ENCODE measurements at regions of chr10 and their contacts with region 1.

Region 1: DNA sequence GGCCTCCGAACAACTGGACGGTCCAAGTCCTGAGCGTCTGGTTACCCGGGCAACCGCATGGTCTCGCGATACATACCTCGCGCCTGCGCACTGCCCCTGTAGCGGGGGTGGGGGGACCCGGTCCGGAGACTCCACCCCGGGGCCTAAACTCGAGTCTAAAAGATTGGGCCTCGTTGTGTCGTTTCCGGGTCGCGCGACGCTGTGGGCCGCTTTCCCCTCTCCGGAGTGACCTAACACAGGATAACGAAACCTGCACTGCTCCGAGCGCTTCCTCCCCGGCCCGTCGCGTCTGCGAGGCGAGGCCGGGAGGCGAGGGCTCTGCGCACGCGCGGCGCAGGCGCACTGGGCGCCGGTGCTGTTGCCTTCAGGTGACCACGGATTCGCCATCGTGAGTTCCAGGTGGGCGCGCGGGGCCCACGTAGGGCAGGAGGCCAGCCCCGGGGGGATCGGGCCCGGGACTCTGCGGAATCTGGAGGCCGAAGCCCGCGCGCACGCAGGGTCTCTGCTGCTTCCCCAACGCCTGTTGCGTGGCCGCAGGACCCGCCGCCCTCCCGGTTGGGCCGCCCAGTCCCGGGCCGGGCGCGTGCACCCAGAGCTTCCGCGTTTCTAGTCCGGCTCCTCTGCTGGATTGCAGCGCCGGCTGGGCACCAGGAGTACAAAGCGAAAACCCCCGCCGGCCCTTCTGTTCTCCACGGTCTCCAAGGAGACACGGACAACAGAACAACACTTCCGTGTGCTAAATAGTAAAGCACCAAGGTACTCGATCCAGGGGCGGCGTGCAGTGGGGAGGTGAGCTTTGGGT is at the start of gene RPP38:
- DNase-seq: peak; percentile 91
- H3K4me3 Mint-ChIP-seq: peak within 1 kb of the TSS; percentile 95
- H3K27ac Mint-ChIP-seq: peak within 1 kb of the TSS; percentile 98
- H3K4me1 Mint-ChIP-seq: peaks cover 21% of the 10 kb centered on the region
- H3K27me3 Mint-ChIP-seq: peaks cover 3% of the 10 kb centered on the region
- total RNA-seq, gene RPP38: 19.4 and 20.3 TPM in 2 replicates

Region 2: GRCh38 chr10:14954001-14954770 is 143.0 kb before region 1 on chr10 and contains the start of gene DCLRE1C:
- intact Hi-C with region 1: loop called (anchors 1 kb)
- DNase-seq: peak; percentile 89
- H3K4me3 Mint-ChIP-seq: peak within 1 kb of the TSS; percentile 89
- H3K27ac Mint-ChIP-seq: peak within 1 kb of the TSS; percentile 93
- H3K4me1 Mint-ChIP-seq: peaks cover 44% of the 10 kb centered on the region
- H3K27me3 Mint-ChIP-seq: no peaks in the 10 kb centered on the region
- total RNA-seq, gene DCLRE1C: 20.5 and 21.0 TPM in 2 replicates

Region 3: DNA sequence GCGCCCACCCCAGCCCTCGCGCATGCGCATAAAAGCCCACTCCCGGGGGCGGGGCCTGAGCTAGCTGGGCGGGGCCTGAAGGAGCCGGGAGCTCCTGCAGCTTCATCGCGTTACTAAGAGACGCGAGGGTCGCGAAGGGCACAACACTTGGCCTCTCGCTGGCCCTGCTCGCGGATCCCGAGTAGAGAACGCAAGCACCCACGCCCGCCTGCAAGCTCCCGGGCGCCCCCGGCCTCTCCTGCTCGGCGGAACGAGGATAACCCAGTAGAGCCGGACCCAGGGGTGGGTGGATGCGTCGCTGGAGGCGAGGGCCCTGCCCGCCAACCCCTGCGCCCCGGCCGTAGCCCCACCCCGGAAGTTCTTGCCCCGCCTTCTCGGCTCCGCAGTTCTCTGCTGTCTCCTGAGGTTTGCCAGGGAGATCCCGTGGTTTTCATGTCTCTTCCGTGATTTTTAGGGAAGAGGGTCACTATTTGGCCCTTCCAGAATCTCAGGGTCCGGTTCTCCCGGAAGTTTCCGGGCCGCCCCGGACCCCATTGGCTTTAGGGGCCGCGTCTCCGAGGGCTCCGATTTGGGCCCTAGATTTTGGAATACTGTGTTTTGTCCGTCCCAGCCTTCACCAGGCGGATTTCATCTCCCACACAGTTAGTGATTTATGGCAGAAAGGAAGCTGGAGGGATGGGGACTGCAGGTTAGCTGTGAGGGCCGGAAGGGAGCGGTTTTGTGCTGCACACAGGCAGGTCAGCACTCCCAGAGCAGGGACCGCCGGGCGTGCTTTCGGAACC is 137.7 kb before region 1 on chr10 and contains the start of gene MEIG1:
- intact Hi-C with region 1: loop called (anchors 1 kb)
- DNase-seq: peak; percentile 88
- H3K4me3 Mint-ChIP-seq: peak within 1 kb of the TSS; percentile 94
- H3K27ac Mint-ChIP-seq: peak within 1 kb of the TSS; percentile 99
- H3K4me1 Mint-ChIP-seq: peaks cover 29% of the 10 kb centered on the region
- H3K27me3 Mint-ChIP-seq: no peaks in the 10 kb centered on the region
- total RNA-seq, gene MEIG1: 0.62 TPM in 1 of 2 replicates, not detected in the other

Region 4: GRCh38 chr10:15122477-15123030 is 25.3 kb after region 1 on chr10:
- intact Hi-C with region 1: loop called (anchors 1 kb)
- DNase-seq: no peak
- H3K4me3 Mint-ChIP-seq: peak overlapping the region; percentile 52
- H3K27ac Mint-ChIP-seq: peak overlapping the region; percentile 93
- H3K4me1 Mint-ChIP-seq: peaks cover 40% of the 10 kb centered on the region
- H3K27me3 Mint-ChIP-seq: no peaks in the 10 kb centered on the region

Region 5: DNA sequence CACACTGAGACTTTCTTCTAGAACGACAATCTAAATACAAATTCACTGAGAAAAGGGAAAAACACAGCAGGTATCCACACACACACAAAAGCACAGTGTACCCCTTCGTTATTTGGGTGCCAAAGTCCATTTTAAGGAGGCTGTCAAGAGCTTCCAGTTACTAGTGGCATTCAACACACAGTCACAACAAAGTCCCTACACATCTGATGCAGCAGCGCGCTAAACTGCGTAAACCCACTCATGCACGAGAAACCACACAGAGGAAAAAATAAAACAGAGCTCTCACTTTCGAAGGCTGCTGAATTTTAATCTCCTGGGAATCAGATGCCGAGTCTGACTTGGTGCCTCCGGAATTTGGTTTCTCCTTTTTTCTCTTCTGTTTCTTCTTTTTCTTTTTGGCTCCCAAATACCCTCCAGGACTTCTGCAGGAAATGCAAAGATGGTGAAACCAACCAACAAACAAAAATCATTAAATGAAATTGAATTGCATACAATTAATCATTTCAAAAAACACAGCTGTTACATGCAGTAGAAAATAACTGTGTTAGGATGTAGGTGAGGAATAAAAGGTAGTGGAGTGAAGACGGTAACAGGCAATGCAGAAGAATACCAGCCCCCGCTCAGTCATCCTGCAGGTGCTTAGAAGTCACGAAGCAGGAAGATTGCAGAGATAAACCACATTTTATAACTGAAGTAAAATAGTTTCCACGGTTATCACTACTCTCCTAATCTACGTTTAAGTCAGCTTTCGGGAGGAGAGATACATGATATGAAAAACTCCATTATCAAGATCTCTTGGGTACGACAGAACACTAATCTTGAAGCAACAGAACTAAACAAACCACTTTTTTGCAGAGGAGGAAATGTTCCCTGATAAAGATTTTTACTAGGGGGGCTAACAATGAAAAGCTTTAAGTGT is 44.2 kb after region 1 on chr10:
- intact Hi-C with region 1: loop called (anchors 1 kb)
- DNase-seq: peak; percentile 36
- H3K4me3 Mint-ChIP-seq: peak overlapping the region; percentile 63
- H3K27ac Mint-ChIP-seq: peak overlapping the region; percentile 90
- H3K4me1 Mint-ChIP-seq: peaks cover 45% of the 10 kb centered on the region
- H3K27me3 Mint-ChIP-seq: no peaks in the 10 kb centered on the region

Measured in activated T-helper 2 cell treated with anti-CD3 and anti-CD28 coated beads, Interferon-gamma antibody, Interleukin-2, Interleukin-4, amounts not matched to agents 10 μg/mL and 5 μg/mL and 100 μg/mL, durations not matched to agents 14 hours and 24 hours and 36 hours (primary cell).